HEK293 (cell line): ENCODE measurements at regions of chrX and their contacts with region 1.

Region 1: GRCh38 chrX:134484039-134484438 is 24.1 kb downstream of the HPRT1 start:
- H3K4me3 ChIP-seq: no peak overlapping the region
- H3K27ac ChIP-seq: no peak overlapping the region
- H3K4me1 ChIP-seq: no peaks in the 10 kb centered on the region
- CTCF ChIP-seq: peak; percentile 52; the same call in 1 of the 2 replicates

Region 2: DNA sequence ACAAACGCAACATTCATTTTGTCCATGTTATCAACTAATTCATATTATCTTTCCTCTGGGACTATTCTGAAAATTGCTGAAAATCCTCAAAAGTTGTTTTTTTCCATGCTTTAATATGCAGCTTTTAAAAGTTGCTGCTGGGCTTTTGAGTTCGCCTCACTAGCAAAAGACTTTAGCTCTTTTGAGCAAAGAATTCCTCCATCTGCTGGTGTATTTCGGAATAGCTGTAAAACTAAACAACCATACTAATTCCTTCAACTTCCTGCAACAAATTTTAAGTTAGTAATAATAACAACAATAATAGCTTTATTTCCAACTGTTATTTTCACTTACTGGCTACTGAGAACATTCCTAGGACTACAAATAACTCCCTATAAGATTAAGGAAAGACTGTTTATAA is 298.8 kb after region 1 on chrX:
- CTCF ChIA-PET with region 1: interaction called, 23 read pairs
- POLR2A ChIA-PET with region 1: no interaction called
- H3K4me3 ChIP-seq: no peak overlapping the region
- H3K27ac ChIP-seq: no peak overlapping the region
- H3K4me1 ChIP-seq: no peaks in the 10 kb centered on the region
- CTCF ChIP-seq: no peak; the same call in 1 of the 2 replicates